Activated CD4-positive, alpha-beta T cell treated with anti-CD3 and anti-CD28 coated beads for 36 hours (primary cell): ENCODE measurements at regions of chr4 and their contacts with region 1.

Region 1: DNA sequence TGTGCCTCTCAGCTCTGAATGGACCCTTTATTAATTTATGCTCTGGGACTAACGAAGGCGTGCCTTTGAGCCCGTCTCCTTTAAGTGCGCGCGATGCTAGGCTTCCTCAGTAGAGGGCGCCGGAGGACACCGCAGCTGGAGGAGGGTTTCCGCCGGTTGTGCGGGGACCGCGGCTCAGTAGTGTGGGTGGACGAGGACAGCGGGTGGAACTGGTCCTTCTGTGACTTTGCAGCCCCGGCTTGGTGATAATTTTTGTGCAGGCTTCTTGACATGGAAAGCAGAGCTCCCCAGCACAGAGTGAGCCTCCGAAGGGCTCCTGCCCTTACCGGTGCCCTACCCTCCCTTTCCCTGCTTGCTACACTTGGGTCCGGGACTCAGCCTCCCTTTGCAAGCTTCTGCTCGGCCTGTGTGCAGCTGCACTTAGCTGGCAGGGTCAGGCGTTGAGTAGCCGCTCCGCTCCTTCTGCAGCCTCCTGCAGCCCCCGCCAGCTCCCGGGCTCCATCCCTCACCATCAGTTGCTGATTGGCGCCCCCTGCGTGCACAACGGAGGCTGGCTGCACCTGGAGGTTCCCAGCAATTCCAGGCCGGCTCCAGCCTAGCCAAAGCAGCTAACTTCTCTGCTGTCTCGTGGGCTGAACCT is 26.8 kb upstream of the BOD1L1 start:
- DNase-seq: peak; percentile 90
- ATAC-seq: peak; percentile 91
- H3K4me3 Mint-ChIP-seq: peak overlapping the region; percentile 66
- H3K27ac Mint-ChIP-seq: no peak overlapping the region
- H3K4me1 Mint-ChIP-seq: peaks cover 12% of the 10 kb centered on the region
- H3K27me3 Mint-ChIP-seq: peaks cover 13% of the 10 kb centered on the region

Region 2: DNA sequence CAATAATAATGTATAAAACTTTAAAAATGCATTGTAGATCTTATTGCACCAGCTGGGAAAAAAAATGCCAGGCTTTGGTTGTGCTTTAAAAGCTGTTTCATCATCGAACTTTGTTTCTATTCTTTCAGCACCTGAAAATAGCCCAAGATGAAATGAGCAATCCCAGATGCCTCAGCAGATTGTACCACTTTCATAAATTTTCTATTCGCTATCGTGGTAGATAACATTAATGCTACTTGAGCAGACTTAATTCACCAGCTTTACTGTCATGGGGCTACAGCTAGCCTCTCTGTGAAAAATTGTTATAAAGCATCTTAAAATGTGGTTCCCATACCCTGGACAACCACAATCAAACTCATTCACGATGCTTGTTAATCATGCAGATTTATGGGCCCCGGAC is 1626.0 kb before region 1 on chr4:
- CTCF ChIA-PET with region 1: no interaction called
- POLR2A ChIA-PET with region 1: no interaction called
- intact Hi-C with region 1: no loop called
- DNase-seq: no peak
- ATAC-seq: no peak
- H3K4me3 Mint-ChIP-seq: no peak overlapping the region
- H3K27ac Mint-ChIP-seq: no peak overlapping the region
- H3K4me1 Mint-ChIP-seq: no peaks in the 10 kb centered on the region
- H3K27me3 Mint-ChIP-seq: no peaks in the 10 kb centered on the region

Region 3: GRCh38 chr4:13627606-13628301 is 26.5 kb before region 1 on chr4 and contains the start of gene BOD1L1:
- CTCF ChIA-PET with region 1: interaction called, 24 read pairs
- POLR2A ChIA-PET with region 1: no interaction called
- intact Hi-C with region 1: loop called in 1 of 2 experiments (anchors 1 kb)
- DNase-seq: peak; percentile 89
- ATAC-seq: peak; percentile 79
- H3K4me3 Mint-ChIP-seq: peak within 1 kb of the TSS; percentile 80
- H3K27ac Mint-ChIP-seq: peak within 1 kb of the TSS; percentile 91
- H3K4me1 Mint-ChIP-seq: peaks cover 43% of the 10 kb centered on the region
- H3K27me3 Mint-ChIP-seq: no peaks in the 10 kb centered on the region
- total RNA-seq, gene BOD1L1: 32.4 to 42.7 TPM

Region 4: DNA sequence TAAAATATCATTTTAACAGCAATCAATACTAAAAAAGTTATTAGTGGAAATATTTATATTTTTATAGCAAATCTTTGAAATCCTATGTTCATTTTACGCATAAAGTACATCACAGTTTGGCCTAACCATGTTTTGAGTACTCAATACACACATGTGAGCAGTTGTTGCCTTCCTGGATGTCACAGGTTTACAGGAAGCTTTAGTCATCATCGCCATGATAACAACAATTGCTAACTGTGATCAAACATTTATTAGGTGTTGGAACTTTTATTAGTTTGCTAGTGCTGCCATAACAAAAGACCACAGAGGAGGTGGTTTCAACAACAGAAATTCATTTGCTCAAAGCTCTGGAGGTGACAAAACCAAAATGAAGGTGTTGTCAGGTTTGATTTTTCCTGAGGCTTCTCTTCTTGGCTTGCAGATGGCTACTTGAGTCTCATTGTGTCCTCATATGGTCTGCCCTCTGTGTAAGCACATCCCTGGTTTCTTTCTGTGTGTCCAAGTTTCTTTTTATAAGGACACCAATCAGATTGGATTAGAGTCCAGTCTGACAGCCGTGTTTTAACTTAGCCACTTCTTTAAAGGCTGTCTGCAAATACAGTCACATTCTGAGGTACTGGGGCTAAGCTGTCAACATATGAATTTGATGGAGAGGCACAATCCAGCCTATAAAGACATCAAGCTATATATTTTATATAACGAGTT is 16.3 kb after region 1 on chr4:
- CTCF ChIA-PET with region 1: interaction called, 10 read pairs
- POLR2A ChIA-PET with region 1: no interaction called
- intact Hi-C with region 1: no loop called
- DNase-seq: no peak
- ATAC-seq: no peak
- H3K4me3 Mint-ChIP-seq: no peak overlapping the region
- H3K27ac Mint-ChIP-seq: no peak overlapping the region
- H3K4me1 Mint-ChIP-seq: no peaks in the 10 kb centered on the region
- H3K27me3 Mint-ChIP-seq: peaks cover 12% of the 10 kb centered on the region

Region 5: DNA sequence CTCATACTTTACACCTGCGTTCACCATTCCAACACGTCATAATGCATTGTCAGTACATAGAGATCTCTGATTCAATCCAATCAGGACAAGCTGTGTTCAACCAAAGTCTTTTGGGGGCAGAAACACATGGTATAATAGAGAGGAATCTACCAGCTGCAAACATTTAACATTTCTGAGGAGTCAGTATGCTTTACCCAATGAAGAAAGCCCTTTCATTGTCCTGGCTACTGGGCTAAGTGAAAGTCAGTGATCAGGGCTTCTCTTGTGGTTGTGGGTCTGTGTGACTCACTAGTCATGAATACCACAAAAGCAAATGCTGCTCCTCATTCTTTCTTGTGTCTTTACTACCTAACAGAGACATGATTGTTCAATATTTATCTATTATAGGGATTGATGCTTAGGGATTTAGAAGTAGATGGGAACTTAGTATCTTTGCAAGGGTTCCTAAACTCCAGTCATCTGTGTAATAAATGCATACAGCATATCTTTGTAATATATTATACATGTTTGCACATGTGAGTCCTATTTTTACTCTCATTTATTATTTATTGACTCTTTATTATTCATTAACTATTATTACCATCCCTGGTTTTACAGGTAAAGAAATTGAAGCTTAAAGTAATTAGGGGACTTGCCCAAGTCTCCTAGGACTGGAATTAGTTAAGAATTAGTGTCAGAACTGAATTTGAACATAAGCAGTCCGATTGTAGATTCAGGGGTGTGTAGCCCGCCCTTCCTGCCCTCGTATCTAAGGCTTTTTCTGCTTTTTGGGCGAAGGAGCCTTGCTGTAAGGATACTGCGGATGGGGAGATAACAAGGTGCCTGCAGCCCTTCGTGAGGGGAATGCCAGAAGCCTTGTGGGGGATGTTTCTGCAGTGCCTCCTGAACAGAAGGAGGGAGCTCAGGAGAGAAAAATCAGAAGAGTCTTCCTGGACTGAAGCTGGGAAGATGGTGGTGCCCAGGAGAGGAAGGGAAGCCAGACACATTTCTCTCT is 326.3 kb after region 1 on chr4:
- CTCF ChIA-PET with region 1: no interaction called
- POLR2A ChIA-PET with region 1: no interaction called
- intact Hi-C with region 1: loop called in 1 of 2 experiments (anchors 10 kb)
- DNase-seq: peak; percentile 19
- ATAC-seq: peak; percentile 65
- H3K4me3 Mint-ChIP-seq: no peak overlapping the region
- H3K27ac Mint-ChIP-seq: no peak overlapping the region
- H3K4me1 Mint-ChIP-seq: peaks cover 8% of the 10 kb centered on the region
- H3K27me3 Mint-ChIP-seq: peaks cover 4% of the 10 kb centered on the region

Region 6: DNA sequence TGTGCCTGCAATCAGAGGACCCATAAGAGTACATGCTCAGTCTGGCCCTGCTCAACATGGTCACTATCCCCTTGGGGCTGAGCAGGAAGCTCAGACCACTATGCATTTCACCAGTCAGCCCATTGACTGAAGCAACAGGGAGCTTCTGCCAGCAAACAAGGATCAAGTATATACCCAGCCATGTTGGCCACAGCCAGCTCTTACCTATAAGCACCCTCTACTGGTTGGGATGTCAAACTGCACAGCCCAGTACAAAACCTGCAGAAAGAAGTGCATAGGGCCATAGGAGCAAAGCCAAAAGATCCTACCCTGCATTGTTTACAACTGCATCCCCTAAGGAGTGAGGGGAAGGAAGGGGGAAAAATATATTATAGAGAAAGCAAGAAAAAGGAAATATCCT is 1133.6 kb after region 1 on chr4:
- CTCF ChIA-PET with region 1: interaction called, 3 read pairs
- POLR2A ChIA-PET with region 1: no interaction called
- intact Hi-C with region 1: loop called (anchors 2 to 10 kb)
- DNase-seq: peak; percentile 42
- ATAC-seq: peak; percentile 27
- H3K4me3 Mint-ChIP-seq: no peak overlapping the region
- H3K27ac Mint-ChIP-seq: no peak overlapping the region
- H3K4me1 Mint-ChIP-seq: peaks cover 35% of the 10 kb centered on the region
- H3K27me3 Mint-ChIP-seq: peaks cover 18% of the 10 kb centered on the region

Region 7: GRCh38 chr4:15182600-15183220 is 1528.4 kb after region 1 on chr4:
- CTCF ChIA-PET with region 1: no interaction called
- POLR2A ChIA-PET with region 1: no interaction called
- intact Hi-C with region 1: loop called in 1 of 2 experiments (anchors 10 kb)
- DNase-seq: peak; percentile 54
- ATAC-seq: peak; percentile 94
- H3K4me3 Mint-ChIP-seq: peak overlapping the region; percentile 13
- H3K27ac Mint-ChIP-seq: peak overlapping the region; percentile 82
- H3K4me1 Mint-ChIP-seq: peaks cover 15% of the 10 kb centered on the region
- H3K27me3 Mint-ChIP-seq: no peaks in the 10 kb centered on the region

Region 8: DNA sequence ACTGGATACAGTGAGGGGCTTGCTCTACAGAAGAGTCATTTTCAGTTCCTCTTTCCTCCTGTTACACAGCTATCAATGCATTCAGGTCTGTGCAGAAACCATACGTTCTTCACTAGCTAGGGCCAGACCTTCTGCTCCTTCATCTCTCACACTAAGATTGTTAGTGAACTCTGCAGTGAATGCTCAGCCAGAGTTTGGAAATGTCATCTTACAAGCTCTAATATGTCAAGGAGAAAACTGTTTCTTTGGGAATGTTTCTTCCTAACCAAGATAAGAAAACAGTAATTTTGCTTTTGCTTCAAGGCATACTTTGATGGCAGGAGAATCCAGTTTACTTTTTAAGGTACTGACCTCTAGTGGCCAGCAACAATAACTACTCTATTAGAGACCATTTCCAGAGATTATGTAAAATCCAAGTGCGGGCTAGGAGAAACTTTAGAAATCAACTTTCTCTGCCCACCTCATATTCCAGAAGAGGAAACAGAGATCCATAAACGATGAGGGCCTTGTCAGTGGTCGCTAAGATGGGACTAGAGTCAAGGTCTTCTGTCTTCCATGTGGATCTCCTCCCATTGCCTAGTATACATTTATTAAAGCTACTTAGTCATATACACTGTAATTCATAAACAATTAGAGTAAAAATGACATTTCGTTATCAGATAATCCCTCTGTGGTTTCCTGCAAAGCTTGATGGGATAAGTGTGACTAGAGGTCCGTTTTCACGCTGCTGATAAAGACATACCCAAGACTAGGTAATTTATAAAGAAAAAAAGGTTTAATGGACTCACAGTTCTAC is 1803.3 kb after region 1 on chr4:
- CTCF ChIA-PET with region 1: no interaction called
- POLR2A ChIA-PET with region 1: no interaction called
- intact Hi-C with region 1: loop called in 1 of 2 experiments (anchors 2 kb)
- DNase-seq: no peak
- ATAC-seq: peak; percentile 69
- H3K4me3 Mint-ChIP-seq: no peak overlapping the region
- H3K27ac Mint-ChIP-seq: no peak overlapping the region
- H3K4me1 Mint-ChIP-seq: peaks cover 3% of the 10 kb centered on the region
- H3K27me3 Mint-ChIP-seq: no peaks in the 10 kb centered on the region